ENCODE measurements at regions of chr12 and their contacts with region 1.

Region 1: GRCh38 chr12:26701604-26702215 is 131.3 kb downstream of the ITPR2 start:
- DNase-seq: peak in 1 of 35 experiments; percentile 45
- ATAC-seq: no peak
- H3K4me3 ChIP-seq: no peak overlapping the region
- H3K4me3 Mint-ChIP-seq: no peak overlapping the region
- H3K27ac ChIP-seq: no peak overlapping the region
- H3K27ac Mint-ChIP-seq: no peak overlapping the region
- H3K4me1 ChIP-seq: no peaks in the 10 kb centered on the region
- H3K4me1 Mint-ChIP-seq: no peaks in the 10 kb centered on the region
- H3K27me3 ChIP-seq: no peaks in the 10 kb centered on the region
- H3K27me3 Mint-ChIP-seq: no peaks in the 10 kb centered on the region

Region 2: DNA sequence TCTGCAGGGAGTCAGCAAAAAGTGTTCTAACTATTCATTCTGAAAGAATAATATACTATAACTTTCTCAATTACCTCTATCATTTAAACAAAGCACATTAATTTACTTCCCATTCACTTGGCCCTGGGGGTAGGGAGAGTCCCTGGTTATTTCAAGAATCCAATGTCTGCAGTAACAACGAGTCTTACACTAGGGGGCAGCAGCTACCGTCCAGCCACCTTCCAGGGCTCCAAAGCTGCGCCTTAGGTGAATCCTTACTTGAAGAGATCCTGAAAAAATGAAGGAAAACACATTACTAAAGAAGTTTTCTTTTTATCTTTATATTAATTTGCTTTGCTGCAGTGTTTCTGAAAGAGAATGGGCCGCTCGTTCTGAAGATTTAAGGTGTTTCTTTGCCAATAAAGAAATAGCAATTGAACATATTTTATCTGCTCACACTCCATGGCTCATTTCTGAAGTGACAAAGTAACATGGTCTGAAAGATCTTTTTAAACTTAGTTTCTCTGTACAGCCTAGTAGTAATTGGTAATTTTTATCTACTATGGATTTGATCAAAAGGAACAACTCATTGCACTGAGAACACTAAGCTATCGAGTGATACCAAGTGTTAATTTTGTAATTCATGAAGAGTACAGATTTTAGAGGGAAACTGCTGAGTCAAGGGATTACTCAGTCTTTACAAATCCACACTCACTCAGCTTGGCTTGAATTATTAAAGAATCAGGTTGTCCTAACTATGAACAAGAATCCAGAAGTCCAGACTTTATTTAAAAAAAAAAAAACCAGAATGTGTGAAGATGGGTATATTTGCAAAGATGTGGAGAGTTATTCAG is 604.4 kb before region 1 on chr12:
- CTCF ChIA-PET with region 1: interaction called in 1 of 2 experiments, 12 read pairs
- POLR2A ChIA-PET with region 1: no interaction called
- DNase-seq: peak in 34 of 35 experiments; percentile 13 to 74 (median 38)
- ATAC-seq: peak; percentile 66 to 82 (median 72)
- H3K4me3 ChIP-seq: no peak overlapping the region
- H3K4me3 Mint-ChIP-seq: no peak overlapping the region
- H3K27ac ChIP-seq: no peak overlapping the region
- H3K27ac Mint-ChIP-seq: no peak overlapping the region
- H3K4me1 ChIP-seq: no peaks in the 10 kb centered on the region
- H3K4me1 Mint-ChIP-seq: peaks cover 0 to 4% (median 0%) of the 10 kb centered on the region in 3 donors
- H3K27me3 ChIP-seq: no peaks in the 10 kb centered on the region
- H3K27me3 Mint-ChIP-seq: peaks cover 5 to 23% of the 10 kb centered on the region in 2 donors

Region 3: GRCh38 chr12:26599096-26599695 is 102.5 kb before region 1 on chr12:
- CTCF ChIA-PET with region 1: no interaction called
- POLR2A ChIA-PET with region 1: no interaction called
- DNase-seq: no peak
- ATAC-seq: no peak
- H3K4me3 ChIP-seq: no peak overlapping the region
- H3K4me3 Mint-ChIP-seq: no peak overlapping the region
- H3K27ac ChIP-seq: no peak overlapping the region
- H3K27ac Mint-ChIP-seq: no peak overlapping the region
- H3K4me1 ChIP-seq: no peaks in the 10 kb centered on the region
- H3K4me1 Mint-ChIP-seq: no peaks in the 10 kb centered on the region
- H3K27me3 ChIP-seq: no peaks in the 10 kb centered on the region
- H3K27me3 Mint-ChIP-seq: no peaks in the 10 kb centered on the region

Region 4: GRCh38 chr12:26628234-26628633 is 73.5 kb before region 1 on chr12:
- CTCF ChIA-PET with region 1: no interaction called
- POLR2A ChIA-PET with region 1: no interaction called
- DNase-seq: no peak
- ATAC-seq: no peak
- H3K4me3 ChIP-seq: no peak overlapping the region
- H3K4me3 Mint-ChIP-seq: no peak overlapping the region
- H3K27ac ChIP-seq: no peak overlapping the region
- H3K27ac Mint-ChIP-seq: no peak overlapping the region
- H3K4me1 ChIP-seq: no peaks in the 10 kb centered on the region
- H3K4me1 Mint-ChIP-seq: no peaks in the 10 kb centered on the region
- H3K27me3 ChIP-seq: no peaks in the 10 kb centered on the region
- H3K27me3 Mint-ChIP-seq: no peaks in the 10 kb centered on the region